Kidney (tissue), 22 donors: ENCODE measurements at regions of chr1 and their contacts with region 1.

Region 1: DNA sequence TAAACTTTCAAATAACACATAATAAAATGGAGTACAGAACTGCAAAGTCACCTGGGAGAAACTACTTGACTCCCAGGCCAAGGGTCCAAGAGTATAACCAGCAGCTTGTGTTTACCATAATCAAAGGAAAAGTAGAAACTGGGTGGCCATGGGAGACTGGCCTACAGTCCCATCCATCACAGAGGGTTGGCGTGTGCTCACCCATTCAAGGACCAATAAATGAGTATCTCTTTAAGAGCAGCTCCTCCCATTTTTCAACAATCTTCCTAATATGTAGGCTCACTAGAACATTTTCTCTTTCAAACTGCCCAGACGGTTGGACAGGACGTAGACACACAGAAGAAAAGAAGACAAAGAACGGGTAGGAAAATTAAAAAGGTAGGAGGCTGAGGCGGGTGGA is at the start of gene FMO3:
- DNase-seq: no peak
- H3K4me3 ChIP-seq: peak within 1 kb of the TSS in 2 of 3 donors; percentile 18 to 39
- H3K27ac ChIP-seq: peak within 1 kb of the TSS in 1 of 2 donors; percentile 28
- H3K4me1 ChIP-seq: no peaks in the 10 kb centered on the region
- H3K27me3 ChIP-seq: no peaks in the 10 kb centered on the region
- CTCF ChIP-seq: no peak
- total RNA-seq, gene FMO3: 19.3 TPM

Region 2: GRCh38 chr1:171191992-171192391 is 101.4 kb after region 1 on chr1:
- intact Hi-C with region 1: loop called (anchors 10 kb)
- DNase-seq: no peak
- H3K4me3 ChIP-seq: no peak overlapping the region
- H3K27ac ChIP-seq: no peak overlapping the region
- H3K4me1 ChIP-seq: peaks cover 0 to 11% (median 0%) of the 10 kb centered on the region in 3 donors
- H3K27me3 ChIP-seq: no peaks in the 10 kb centered on the region
- CTCF ChIP-seq: no peak